Activated CD4-positive, alpha-beta T cell treated with anti-CD3 and anti-CD28 coated beads for 36 hours (primary cell): ENCODE measurements at regions of chr11 and their contacts with region 1.

Region 1: GRCh38 chr11:125404776-125405435 is 91.2 kb downstream of the FEZ1 start:
- DNase-seq: peak; percentile 83
- ATAC-seq: peak; percentile 96
- H3K4me3 Mint-ChIP-seq: no peak overlapping the region
- H3K27ac Mint-ChIP-seq: no peak overlapping the region
- H3K4me1 Mint-ChIP-seq: peaks cover 2% of the 10 kb centered on the region
- H3K27me3 Mint-ChIP-seq: peaks cover 55% of the 10 kb centered on the region

Region 2: DNA sequence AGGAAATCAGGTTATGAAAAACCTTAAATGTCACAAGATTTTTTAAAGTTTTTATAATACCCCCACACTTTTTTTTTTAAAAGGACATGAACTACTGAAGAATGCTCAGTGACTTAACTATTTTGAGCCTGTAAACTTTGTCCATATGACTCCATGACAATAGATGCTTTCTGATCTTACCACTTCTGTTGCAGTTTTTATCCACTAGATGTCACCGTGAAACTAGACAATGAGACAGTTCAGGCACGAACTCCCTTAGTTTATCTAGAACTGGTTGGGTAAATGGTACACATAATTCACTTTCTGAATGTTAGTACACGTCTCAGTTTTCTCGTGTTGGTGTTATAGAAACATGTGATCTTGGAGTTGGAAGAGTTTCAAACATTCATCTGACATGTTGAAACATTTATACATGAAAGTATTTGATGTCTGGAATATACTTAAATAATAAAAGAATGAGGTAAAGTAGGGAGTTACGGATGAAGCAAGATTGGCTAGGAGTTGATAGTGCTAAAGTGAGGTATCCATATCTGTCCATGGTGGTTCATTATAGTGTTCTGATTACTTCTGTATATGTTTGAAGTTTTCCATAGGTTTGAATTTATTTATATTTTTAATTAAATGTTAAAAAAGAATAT is 442.8 kb before region 1 on chr11:
- CTCF ChIA-PET with region 1: no interaction called
- POLR2A ChIA-PET with region 1: no interaction called
- intact Hi-C with region 1: loop called in 1 of 2 experiments (anchors 1 kb)
- DNase-seq: no peak
- ATAC-seq: peak; percentile 98
- H3K4me3 Mint-ChIP-seq: no peak overlapping the region
- H3K27ac Mint-ChIP-seq: no peak overlapping the region
- H3K4me1 Mint-ChIP-seq: no peaks in the 10 kb centered on the region
- H3K27me3 Mint-ChIP-seq: no peaks in the 10 kb centered on the region

Region 3: GRCh38 chr11:125091247-125091876 is 313.5 kb before region 1 on chr11:
- CTCF ChIA-PET with region 1: no interaction called
- POLR2A ChIA-PET with region 1: no interaction called
- intact Hi-C with region 1: loop called in 1 of 2 experiments (anchors 10 kb)
- DNase-seq: no peak
- ATAC-seq: peak; percentile 49
- H3K4me3 Mint-ChIP-seq: no peak overlapping the region
- H3K27ac Mint-ChIP-seq: no peak overlapping the region
- H3K4me1 Mint-ChIP-seq: peaks cover 3% of the 10 kb centered on the region
- H3K27me3 Mint-ChIP-seq: no peaks in the 10 kb centered on the region

Region 4: GRCh38 chr11:125164422-125165110 is 240.3 kb before region 1 on chr11 and contains the start of gene PKNOX2:
- CTCF ChIA-PET with region 1: no interaction called
- POLR2A ChIA-PET with region 1: no interaction called
- intact Hi-C with region 1: loop called in 1 of 2 experiments (anchors 5 kb)
- DNase-seq: peak; percentile 83
- ATAC-seq: peak; percentile 85
- H3K4me3 Mint-ChIP-seq: peak within 1 kb of the TSS; percentile 77
- H3K27ac Mint-ChIP-seq: peak within 1 kb of the TSS; percentile 51
- H3K4me1 Mint-ChIP-seq: peaks cover 18% of the 10 kb centered on the region
- H3K27me3 Mint-ChIP-seq: peaks cover 53% of the 10 kb centered on the region
- total RNA-seq, gene PKNOX2: not detected